Left cardiac atrium (tissue), 4 donors: ENCODE measurements at regions of chr9 and their contacts with region 1.

Region 1: GRCh38 chr9:2872257-2872935 is 28.5 kb upstream of the PUM3 start:
- DNase-seq: no peak
- ATAC-seq: no peak

Region 2: GRCh38 chr9:2764353-2764752 is 108.0 kb before region 1 on chr9:
- intact Hi-C with region 1: no loop called
- DNase-seq: no peak
- ATAC-seq: no peak

Region 3: DNA sequence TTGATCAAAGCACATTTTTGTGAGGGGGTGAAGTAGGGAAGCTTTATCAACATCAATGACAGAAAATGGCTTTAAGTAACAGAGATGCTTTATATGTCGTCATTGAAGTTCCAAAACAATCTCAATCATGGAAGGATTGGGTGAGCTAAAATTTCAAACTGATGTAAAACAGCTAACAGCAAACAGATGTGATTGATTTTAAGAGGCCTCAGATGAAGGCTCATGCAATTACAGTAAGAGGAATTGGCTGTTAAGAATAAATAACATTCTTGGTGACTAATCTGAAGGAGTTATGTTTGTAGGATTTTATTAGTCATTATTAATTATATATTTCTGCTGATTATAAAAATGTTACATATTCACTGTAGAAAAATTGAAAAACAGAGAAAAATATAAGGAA is 35.0 kb after region 1 on chr9:
- intact Hi-C with region 1: no loop called
- DNase-seq: no peak
- ATAC-seq: no peak

Region 4: DNA sequence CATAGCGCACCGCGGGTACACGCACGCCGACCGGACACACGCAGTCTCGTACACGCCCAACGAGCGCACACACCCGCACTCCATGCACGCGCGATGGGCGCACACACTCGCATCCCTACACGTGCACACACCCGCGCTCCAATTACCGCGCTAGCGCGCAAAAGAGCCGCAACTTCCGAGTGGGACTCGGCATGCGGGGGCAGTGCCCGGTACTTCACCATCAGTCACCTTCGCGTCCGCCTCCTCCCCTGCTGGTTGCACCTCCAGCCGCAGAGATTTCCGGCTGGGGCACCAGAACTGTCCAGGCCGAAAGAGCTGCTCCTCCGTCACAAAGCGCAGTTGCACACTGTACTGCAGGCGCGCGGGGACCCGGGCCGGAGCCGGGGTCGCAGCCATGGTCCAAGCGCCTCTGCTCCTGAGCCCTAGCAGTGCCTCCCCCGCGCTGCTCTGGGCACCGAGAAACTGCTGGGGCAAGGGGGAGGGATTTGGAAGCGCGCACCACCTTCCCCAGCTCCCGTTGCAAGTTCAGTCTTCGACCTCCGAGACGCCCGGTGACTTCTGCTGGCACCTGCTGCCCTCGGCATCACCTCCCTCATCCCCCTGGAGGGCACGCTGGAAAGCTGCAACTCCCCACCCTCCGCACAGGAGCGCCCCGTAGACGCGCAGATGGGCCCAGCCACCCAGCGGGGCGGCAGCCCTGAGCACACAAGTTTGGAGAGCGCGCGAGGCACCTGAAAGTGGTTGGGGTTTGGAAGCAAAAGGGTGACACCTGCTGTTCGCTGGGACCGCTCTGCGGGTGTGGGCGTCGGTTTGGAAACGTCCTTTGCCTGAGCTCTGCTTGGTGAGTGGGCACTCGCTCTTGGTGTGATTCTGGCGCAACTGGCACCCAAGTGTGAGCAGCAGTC is 308.9 kb after region 1 on chr9:
- intact Hi-C with region 1: loop called (anchors 5 to 10 kb)
- DNase-seq: peak; percentile 36
- ATAC-seq: peak; percentile 57 to 80

Region 5: GRCh38 chr9:3948826-3949556 is 1076.6 kb after region 1 on chr9:
- intact Hi-C with region 1: no loop called
- DNase-seq: no peak
- ATAC-seq: peak; percentile 65 to 84